Activated T-helper 1 cell treated with anti-CD3 and anti-CD28 coated beads, Interleukin-12 subunit alpha, Interleukin-12 subunit beta, Interleukin-2, Interleukin-4 antibody, amounts not matched to agents 30 ng/mL and 10 ng/mL and 1 ng/mL, durations not matched to agents 14 hours and 24 hours and 36 hours (primary cell): ENCODE measurements at regions of chr9 and their contacts with region 1.

Region 1: DNA sequence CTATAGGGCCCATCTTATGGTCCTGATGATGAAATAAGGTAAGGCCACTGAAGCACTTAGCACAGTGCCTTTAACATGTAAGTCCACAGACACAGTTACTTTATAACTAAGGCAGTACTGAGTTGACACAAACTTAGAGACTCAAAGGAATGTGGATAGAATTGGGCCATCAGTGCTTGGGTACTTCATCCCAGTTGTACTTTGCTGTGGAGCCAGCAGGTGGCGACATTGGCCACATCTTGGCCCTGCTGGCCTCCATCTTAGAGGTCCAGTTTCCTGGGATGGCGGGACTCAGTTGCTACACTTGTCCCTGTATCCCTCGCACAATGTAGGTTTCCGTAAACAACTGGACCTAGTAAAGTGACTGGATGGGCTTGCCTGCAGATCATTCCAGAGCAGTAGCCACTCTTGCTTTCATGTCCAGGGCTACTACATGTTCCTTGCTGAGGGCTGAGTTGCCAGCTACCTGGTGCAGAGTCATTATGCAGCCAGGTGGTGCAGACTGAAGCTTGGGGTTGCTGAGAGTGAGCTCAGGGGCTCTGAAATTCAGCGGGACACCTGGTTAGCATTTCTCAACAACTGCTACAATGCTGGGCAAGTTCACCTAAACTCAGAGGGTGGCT is 10.6 kb downstream of the MTAP start:
- DNase-seq: peak; percentile 47
- H3K4me3 Mint-ChIP-seq: no peak overlapping the region
- H3K27ac Mint-ChIP-seq: peak overlapping the region; percentile 5
- H3K4me1 Mint-ChIP-seq: peaks cover 28% of the 10 kb centered on the region
- H3K27me3 Mint-ChIP-seq: no peaks in the 10 kb centered on the region

Region 2: GRCh38 chr9:21255538-21256253 is 557.4 kb before region 1 on chr9:
- intact Hi-C with region 1: no loop called
- DNase-seq: no peak
- H3K4me3 Mint-ChIP-seq: no peak overlapping the region
- H3K27ac Mint-ChIP-seq: no peak overlapping the region
- H3K4me1 Mint-ChIP-seq: peaks cover 6% of the 10 kb centered on the region
- H3K27me3 Mint-ChIP-seq: peaks cover 38% of the 10 kb centered on the region

Region 3: GRCh38 chr9:21616082-21616778 is 196.8 kb before region 1 on chr9:
- intact Hi-C with region 1: no loop called
- DNase-seq: no peak
- H3K4me3 Mint-ChIP-seq: no peak overlapping the region
- H3K27ac Mint-ChIP-seq: no peak overlapping the region
- H3K4me1 Mint-ChIP-seq: peaks cover 32% of the 10 kb centered on the region
- H3K27me3 Mint-ChIP-seq: peaks cover 4% of the 10 kb centered on the region

Region 4: DNA sequence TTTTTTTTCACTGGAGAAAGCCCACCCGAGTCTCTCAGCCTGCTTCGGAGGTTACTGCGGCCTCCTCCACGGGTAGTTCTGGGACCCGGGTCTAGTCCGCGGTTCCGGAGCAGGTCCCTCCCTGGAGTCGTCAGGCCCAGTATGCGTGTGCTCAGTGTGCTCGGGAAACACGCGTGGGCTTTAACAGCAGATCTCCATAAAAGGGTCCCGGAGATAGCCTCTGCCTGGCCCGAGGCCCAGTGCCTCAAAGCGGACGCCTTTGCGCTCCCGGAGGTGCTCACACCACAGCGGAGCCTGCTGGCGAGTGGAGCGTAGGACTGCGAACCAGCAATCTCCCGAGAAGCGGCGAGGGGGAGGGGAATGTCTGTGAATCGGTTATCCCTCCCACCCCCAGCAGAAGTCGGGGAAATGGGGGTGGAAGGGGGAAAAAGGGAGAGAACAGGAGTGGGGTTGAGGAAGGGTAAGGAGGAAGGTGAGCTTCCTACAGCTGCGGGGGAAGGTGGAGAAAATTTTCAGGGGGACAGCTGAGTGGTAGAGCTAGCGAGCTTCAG is 152.4 kb after region 1 on chr9:
- intact Hi-C with region 1: loop called (anchors 1 kb)
- DNase-seq: peak; percentile 39
- H3K4me3 Mint-ChIP-seq: peak overlapping the region; percentile 43
- H3K27ac Mint-ChIP-seq: peak overlapping the region; percentile 42
- H3K4me1 Mint-ChIP-seq: peaks cover 51% of the 10 kb centered on the region
- H3K27me3 Mint-ChIP-seq: peaks cover 80% of the 10 kb centered on the region

Region 5: GRCh38 chr9:22175972-22176545 is 363.0 kb after region 1 on chr9:
- intact Hi-C with region 1: loop called (anchors 2 kb)
- DNase-seq: peak; percentile 5
- H3K4me3 Mint-ChIP-seq: peak overlapping the region; percentile 1
- H3K27ac Mint-ChIP-seq: peak overlapping the region; percentile 51
- H3K4me1 Mint-ChIP-seq: peaks cover 30% of the 10 kb centered on the region
- H3K27me3 Mint-ChIP-seq: peaks cover 10% of the 10 kb centered on the region

Region 6: DNA sequence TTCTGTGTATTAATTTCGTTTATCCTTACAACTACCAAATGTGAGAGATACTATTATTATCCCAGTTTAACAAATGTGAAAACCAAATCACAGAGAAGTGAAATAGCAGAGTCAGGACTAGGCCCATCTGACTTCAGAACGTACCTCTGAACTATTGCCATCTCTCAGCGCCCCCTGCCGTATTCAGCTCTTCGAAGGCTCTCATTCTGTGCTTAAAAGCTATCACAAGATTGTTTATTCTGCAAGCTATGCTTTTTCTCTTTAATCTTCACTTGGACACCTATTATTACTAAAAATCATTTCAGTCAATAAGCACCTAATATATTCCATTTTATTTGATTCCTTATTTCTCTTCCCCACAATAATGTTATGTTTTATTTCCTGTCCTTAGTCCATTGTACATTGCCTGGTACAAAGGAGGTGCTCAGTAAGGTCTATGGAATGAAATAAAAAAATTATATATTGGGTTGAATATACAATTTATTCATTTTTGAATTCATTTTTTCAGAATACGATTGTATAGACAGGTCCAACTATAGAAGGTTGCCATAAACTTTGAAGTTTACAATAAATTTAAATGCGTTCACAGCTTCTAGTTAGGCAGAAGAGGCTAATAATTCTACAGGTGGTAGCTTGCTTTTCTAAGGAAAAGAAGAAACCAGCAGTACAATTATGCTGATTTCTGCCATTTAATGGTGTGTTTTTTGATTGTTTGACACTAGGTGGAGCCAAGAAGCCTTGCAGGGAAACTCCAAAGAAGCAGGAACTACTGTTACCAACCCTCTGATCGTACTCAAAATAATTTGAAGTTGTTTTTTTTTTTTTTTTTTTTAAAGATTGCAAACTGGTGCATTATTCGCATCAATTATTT is 431.3 kb after region 1 on chr9:
- intact Hi-C with region 1: loop called (anchors 1 kb)
- DNase-seq: no peak
- H3K4me3 Mint-ChIP-seq: no peak overlapping the region
- H3K27ac Mint-ChIP-seq: no peak overlapping the region
- H3K4me1 Mint-ChIP-seq: peaks cover 28% of the 10 kb centered on the region
- H3K27me3 Mint-ChIP-seq: peaks cover 61% of the 10 kb centered on the region